ENCODE measurements at regions of chr11 and their contacts with region 1.

Region 1: GRCh38 chr11:79809487-79809886 is 368.7 kb upstream of the TENM4 start:
- DNase-seq: no peak
- H3K4me3 ChIP-seq: no peak overlapping the region
- H3K27ac ChIP-seq: no peak overlapping the region
- H3K4me1 ChIP-seq: no peaks in the 10 kb centered on the region
- H3K27me3 ChIP-seq: no peaks in the 10 kb centered on the region
- CTCF ChIP-seq: no peak
- EP300 ChIP-seq: no peak
- POLR2A ChIP-seq: no peak

Region 2: GRCh38 chr11:79822766-79823165 is 13.3 kb after region 1 on chr11:
- intact Hi-C with region 1: loop called (anchors 1 kb)
- DNase-seq: no peak
- H3K4me3 ChIP-seq: no peak overlapping the region
- H3K27ac ChIP-seq: no peak overlapping the region
- H3K4me1 ChIP-seq: no peaks in the 10 kb centered on the region
- H3K27me3 ChIP-seq: no peaks in the 10 kb centered on the region
- CTCF ChIP-seq: no peak
- EP300 ChIP-seq: no peak
- POLR2A ChIP-seq: no peak

Measured in esophagus muscularis mucosa (tissue), 4 donors.